Activated CD4-positive, alpha-beta memory T cell treated with anti-CD3 and anti-CD28 coated beads for 36 hours (primary cell): ENCODE measurements at regions of chr2 and their contacts with region 1.

Region 1: GRCh38 chr2:111659416-111660281 is 224.3 kb downstream of the ANAPC1 start:
- DNase-seq: no peak
- H3K4me3 Mint-ChIP-seq: no peak overlapping the region
- H3K27ac Mint-ChIP-seq: no peak overlapping the region
- H3K4me1 Mint-ChIP-seq: peaks cover 22% of the 10 kb centered on the region
- H3K27me3 Mint-ChIP-seq: peaks cover 23% of the 10 kb centered on the region

Region 2: GRCh38 chr2:110886826-110887573 is 772.6 kb before region 1 on chr2:
- CTCF ChIA-PET with region 1: no interaction called
- POLR2A ChIA-PET with region 1: no interaction called
- intact Hi-C with region 1: no loop called
- DNase-seq: no peak
- H3K4me3 Mint-ChIP-seq: no peak overlapping the region
- H3K27ac Mint-ChIP-seq: no peak overlapping the region
- H3K4me1 Mint-ChIP-seq: peaks cover 2% of the 10 kb centered on the region
- H3K27me3 Mint-ChIP-seq: peaks cover 34% of the 10 kb centered on the region

Region 3: GRCh38 chr2:111624401-111625156 is 35.1 kb before region 1 on chr2:
- CTCF ChIA-PET with region 1: no interaction called
- POLR2A ChIA-PET with region 1: no interaction called
- intact Hi-C with region 1: loop called (anchors 5 kb)
- DNase-seq: no peak
- H3K4me3 Mint-ChIP-seq: no peak overlapping the region
- H3K27ac Mint-ChIP-seq: no peak overlapping the region
- H3K4me1 Mint-ChIP-seq: peaks cover 27% of the 10 kb centered on the region
- H3K27me3 Mint-ChIP-seq: peaks cover 20% of the 10 kb centered on the region

Region 4: DNA sequence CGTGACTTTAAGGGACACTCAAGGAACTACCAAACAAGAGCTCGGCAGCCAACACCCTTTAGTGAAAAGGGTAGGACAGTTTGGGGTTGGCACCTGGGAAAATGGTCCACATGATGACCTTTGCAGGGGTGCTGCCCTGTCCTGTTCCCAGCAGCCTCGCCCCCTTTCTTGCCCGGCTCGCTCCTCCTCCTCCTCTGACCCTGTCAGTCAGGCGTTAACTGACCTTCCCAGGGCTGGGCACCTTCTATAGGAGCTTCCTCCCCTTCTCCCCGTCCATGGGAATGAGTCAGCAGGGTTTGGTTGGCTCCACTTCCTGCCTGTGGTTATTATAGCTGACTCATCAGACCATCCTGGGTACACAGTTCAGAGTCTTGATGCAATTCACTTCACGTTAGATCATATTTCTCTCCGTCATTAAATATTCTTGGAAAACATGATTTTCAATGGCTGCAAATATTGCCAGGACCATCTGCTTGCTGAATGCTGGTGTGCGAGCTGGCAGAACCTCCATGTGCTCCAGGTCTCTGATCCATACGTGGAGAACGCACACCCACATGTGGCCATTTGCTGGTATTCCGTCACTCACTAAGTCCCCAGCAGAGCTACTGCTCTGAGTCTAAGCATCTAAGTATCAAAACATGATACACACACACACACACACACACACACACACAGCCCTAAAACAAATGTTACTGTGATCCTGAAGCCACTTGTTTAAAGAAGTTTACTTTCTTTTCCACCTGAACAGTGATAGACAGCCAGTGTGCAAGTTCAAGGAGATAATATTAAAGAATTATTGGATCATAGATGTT is 39.3 kb after region 1 on chr2:
- CTCF ChIA-PET with region 1: no interaction called
- POLR2A ChIA-PET with region 1: no interaction called
- intact Hi-C with region 1: loop called (anchors 2 kb)
- DNase-seq: peak; percentile 84
- H3K4me3 Mint-ChIP-seq: peak overlapping the region; percentile 44
- H3K27ac Mint-ChIP-seq: peak overlapping the region; percentile 70
- H3K4me1 Mint-ChIP-seq: peaks cover 32% of the 10 kb centered on the region
- H3K27me3 Mint-ChIP-seq: peaks cover 13% of the 10 kb centered on the region